PC-3 (cell line): ENCODE measurements at regions of chr3 and their contacts with region 1.

Region 1: GRCh38 chr3:155701882-155702465 is 42.9 kb downstream of the PLCH1 start:
- DNase-seq: peak; percentile 90
- ATAC-seq: peak; percentile 41
- H3K4me3 ChIP-seq: no peak overlapping the region
- H3K27ac ChIP-seq: no peak overlapping the region
- H3K4me1 ChIP-seq: peaks cover 14% of the 10 kb centered on the region
- H3K27me3 ChIP-seq: no peaks in the 10 kb centered on the region
- CTCF ChIP-seq: peak; percentile 89

Region 2: DNA sequence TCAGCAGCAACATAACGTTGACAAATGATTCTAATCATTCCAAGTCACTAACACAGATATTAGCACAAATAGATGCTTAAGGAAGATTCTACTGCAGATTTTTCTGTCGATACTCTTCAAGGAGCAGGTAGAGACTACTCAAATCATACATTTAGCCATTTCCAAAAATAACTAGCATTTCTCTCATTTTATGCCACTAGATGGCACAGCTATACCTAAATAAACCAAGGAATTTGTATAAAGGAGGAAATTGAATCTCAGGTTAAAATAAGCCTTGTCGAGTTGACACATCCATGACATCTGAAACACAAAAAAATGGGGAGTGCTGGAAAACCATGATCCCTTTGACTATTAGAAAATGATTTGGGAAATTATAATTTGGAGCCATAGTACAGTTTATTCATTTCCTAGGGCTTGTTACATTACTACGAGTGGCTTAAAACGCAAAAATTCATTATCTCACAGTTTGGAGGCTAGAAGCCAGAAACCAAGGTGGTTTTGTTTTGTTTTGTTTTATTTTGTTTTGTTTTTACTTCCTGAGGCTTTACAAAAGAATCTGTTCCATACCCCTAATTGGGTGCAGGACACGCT is 349.0 kb before region 1 on chr3:
- CTCF ChIA-PET with region 1: interaction called, 8 read pairs
- POLR2A ChIA-PET with region 1: no interaction called
- intact Hi-C with region 1: loop called (anchors 1 kb)
- DNase-seq: peak; percentile 84
- ATAC-seq: peak; percentile 62
- H3K4me3 ChIP-seq: no peak overlapping the region
- H3K27ac ChIP-seq: no peak overlapping the region
- H3K4me1 ChIP-seq: peaks cover 3% of the 10 kb centered on the region; the same call in 1 of the 2 replicates
- H3K27me3 ChIP-seq: no peaks in the 10 kb centered on the region
- CTCF ChIP-seq: peak; percentile 81

Region 3: GRCh38 chr3:155416500-155417121 is 285.4 kb before region 1 on chr3:
- CTCF ChIA-PET with region 1: no interaction called
- POLR2A ChIA-PET with region 1: no interaction called
- intact Hi-C with region 1: loop called (anchors 1 kb)
- DNase-seq: peak; percentile 97
- ATAC-seq: peak; percentile 96
- H3K4me3 ChIP-seq: peak overlapping the region; percentile 41; the same call in 1 of the 2 replicates
- H3K27ac ChIP-seq: peak overlapping the region; percentile 84
- H3K4me1 ChIP-seq: peaks cover 27% of the 10 kb centered on the region
- H3K27me3 ChIP-seq: no peaks in the 10 kb centered on the region
- CTCF ChIP-seq: no peak

Region 4: DNA sequence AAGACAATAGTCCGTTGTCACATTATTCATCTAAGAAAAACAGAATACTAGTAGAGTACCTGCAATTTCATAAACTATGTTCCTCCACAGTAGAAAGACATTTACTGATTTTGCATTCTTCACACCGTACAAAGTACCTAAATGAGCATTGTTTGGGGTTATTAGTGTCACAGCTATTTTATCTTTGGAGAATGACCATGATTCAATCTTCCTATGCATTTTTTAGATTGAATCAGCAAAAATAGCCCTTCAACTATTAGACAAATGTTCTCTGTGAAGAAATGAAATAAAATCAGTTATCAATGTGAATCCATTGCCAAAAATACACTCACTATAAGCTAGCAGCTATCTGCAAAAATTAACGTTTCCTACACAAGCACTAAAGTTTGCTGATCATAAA is 133.7 kb before region 1 on chr3:
- CTCF ChIA-PET with region 1: no interaction called
- POLR2A ChIA-PET with region 1: no interaction called
- intact Hi-C with region 1: no loop called
- DNase-seq: no peak
- ATAC-seq: no peak
- H3K4me3 ChIP-seq: no peak overlapping the region
- H3K27ac ChIP-seq: no peak overlapping the region
- H3K4me1 ChIP-seq: no peaks in the 10 kb centered on the region
- H3K27me3 ChIP-seq: no peaks in the 10 kb centered on the region
- CTCF ChIP-seq: no peak

Region 5: GRCh38 chr3:155581579-155581978 is 120.4 kb before region 1 on chr3:
- CTCF ChIA-PET with region 1: no interaction called
- POLR2A ChIA-PET with region 1: no interaction called
- intact Hi-C with region 1: no loop called
- DNase-seq: no peak
- ATAC-seq: no peak
- H3K4me3 ChIP-seq: no peak overlapping the region
- H3K27ac ChIP-seq: no peak overlapping the region
- H3K4me1 ChIP-seq: no peaks in the 10 kb centered on the region
- H3K27me3 ChIP-seq: no peaks in the 10 kb centered on the region
- CTCF ChIP-seq: no peak

Region 6: GRCh38 chr3:155744626-155745324 is 42.8 kb after region 1 on chr3 and contains the start of gene PLCH1:
- CTCF ChIA-PET with region 1: interaction called, 3 read pairs
- POLR2A ChIA-PET with region 1: no interaction called
- intact Hi-C with region 1: loop called (anchors 1 kb)
- DNase-seq: peak; percentile 81
- ATAC-seq: peak; percentile 59
- H3K4me3 ChIP-seq: peak within 1 kb of the TSS; percentile 91
- H3K27ac ChIP-seq: peak within 1 kb of the TSS; percentile 17
- H3K4me1 ChIP-seq: peaks cover 48% of the 10 kb centered on the region
- H3K27me3 ChIP-seq: no peaks in the 10 kb centered on the region
- CTCF ChIP-seq: no peak
- total RNA-seq, gene PLCH1: 4.1 and 4.5 TPM in 2 replicates

Region 7: DNA sequence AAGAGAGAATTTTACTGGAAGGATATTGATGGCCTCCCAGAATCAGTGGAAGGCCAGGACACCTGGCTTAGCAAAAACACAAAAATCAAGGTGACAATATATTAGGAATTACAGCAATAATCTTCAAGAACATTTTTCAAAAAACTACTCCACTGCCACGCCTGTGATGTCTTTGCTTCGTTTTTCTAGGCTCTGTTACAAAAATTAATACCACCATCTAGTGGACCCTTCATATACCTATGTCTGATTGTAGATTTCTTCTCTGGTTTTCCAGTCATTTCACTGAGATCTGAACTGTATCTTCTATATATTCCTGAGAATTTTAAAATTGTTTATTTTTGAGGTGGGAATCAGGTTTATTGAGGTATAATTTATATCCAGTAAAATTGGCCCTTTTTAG is 157.9 kb after region 1 on chr3:
- CTCF ChIA-PET with region 1: no interaction called
- POLR2A ChIA-PET with region 1: no interaction called
- intact Hi-C with region 1: loop called (anchors 2 kb)
- DNase-seq: peak; percentile 42
- ATAC-seq: peak; percentile 75
- H3K4me3 ChIP-seq: no peak overlapping the region
- H3K27ac ChIP-seq: no peak overlapping the region
- H3K4me1 ChIP-seq: peaks cover 3% of the 10 kb centered on the region; the same call in 1 of the 2 replicates
- H3K27me3 ChIP-seq: no peaks in the 10 kb centered on the region
- CTCF ChIP-seq: peak; percentile 58; the same call in 1 of the 2 replicates